ENCODE measurements at regions of chr10 and their contacts with region 1.

Region 1: DNA sequence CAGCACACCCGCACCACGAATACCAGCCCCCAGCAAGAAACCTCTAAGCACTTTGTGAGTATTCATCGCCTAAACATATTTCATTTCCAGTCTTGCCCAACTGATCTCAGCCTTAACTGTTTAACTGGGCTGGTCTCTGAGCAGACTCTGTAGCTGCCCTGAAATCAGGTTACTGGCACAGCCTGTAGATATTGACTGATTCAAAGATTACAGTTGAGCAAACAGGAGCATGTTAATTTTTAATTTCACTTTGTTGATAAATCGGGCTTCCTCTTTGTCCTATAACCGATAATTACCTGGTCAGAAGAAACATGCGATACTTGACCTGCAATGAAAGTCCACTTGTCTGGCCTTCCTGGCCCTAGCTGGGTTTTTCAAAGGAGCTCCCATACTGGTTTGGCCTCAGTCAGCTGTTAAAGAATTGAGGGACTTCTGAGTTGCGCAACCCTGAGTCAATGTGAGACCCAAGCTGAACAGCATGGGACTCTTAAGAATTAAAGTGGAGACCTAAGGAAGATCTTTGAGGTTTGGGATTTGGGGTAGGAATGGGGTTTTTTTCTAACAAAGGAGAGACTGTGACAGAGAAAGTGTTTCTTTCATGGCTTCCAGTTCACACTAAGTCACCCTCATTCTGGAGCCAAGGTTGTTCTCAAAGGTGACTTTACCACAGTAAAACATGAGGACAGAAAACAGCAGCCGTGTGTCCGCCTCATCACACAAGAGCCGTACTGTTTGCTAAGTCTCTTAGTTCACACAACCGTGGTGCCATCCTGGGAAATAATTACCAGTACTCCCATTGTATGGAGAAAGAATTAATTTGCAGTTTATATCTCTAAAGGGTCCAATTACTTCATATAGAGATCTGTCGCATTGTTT is 75.9 kb downstream of the PPP1R3C start:
- DNase-seq: peak; percentile 95
- ATAC-seq: peak; percentile 95
- H3K4me3 ChIP-seq: peak overlapping the region in 1 of 3 experiments; percentile 34; a peak in 1 of 6 replicates
- H3K27ac ChIP-seq: peak overlapping the region; percentile 87
- H3K4me1 ChIP-seq: peaks cover 96% of the 10 kb centered on the region
- H3K27me3 ChIP-seq: no peaks in the 10 kb centered on the region
- CTCF ChIP-seq: no peak
- EP300 ChIP-seq: peak; percentile 31 to 94; a peak in 2 of 4 replicates
- POLR2A ChIP-seq: 0 out of 4 replicates have a peak, but pooled peaks have one; percentile 11 to 33
- RAD21 ChIP-seq: peak; percentile 19; the same call in 1 of the 2 replicates

Region 2: DNA sequence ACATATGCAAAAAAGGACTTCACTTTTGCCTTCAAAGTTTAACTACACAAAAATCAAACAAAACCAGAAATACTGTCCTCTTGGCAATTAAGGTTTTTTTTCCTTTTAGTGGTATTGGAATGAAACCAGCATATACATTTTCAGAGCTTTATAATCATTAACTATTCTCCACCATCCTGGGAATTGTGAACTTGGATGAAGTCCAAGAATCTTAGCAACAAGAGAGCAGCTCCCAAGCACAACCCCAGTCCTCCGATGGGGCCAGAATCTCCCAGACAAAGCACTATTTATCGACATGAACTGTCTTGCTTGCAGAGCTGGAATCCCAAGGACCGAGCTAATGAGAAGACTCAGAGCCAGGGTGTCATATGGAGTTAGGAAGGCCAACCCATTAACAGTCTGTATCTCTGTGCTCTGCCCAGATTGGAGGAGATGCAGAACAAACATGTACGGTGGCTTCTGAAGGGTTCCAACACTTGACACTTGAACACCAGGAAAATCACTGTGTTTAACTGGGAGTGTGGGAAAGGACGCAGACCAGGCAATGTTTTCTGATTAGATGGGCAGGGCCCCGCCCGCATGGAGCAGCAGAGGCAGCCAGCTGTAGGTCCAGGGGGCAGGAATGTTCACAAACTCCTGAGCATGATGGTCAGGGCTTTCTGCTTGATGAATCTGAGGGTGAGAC is 40.4 kb after region 1 on chr10:
- CTCF ChIA-PET with region 1: no interaction called
- POLR2A ChIA-PET with region 1: no interaction called
- in situ Hi-C with region 1: no loop called
- intact Hi-C with region 1: loop called (anchors 5 kb)
- DNase-seq: peak; percentile 60
- ATAC-seq: peak; percentile 90
- H3K4me3 ChIP-seq: peak overlapping the region in 2 of 3 experiments; percentile 34 to 44; a peak in 4 of 6 replicates
- H3K27ac ChIP-seq: peak overlapping the region; percentile 8
- H3K4me1 ChIP-seq: peaks cover 29% of the 10 kb centered on the region
- H3K27me3 ChIP-seq: peaks cover 0 to 17% of the 10 kb centered on the region in 2 experiments; a peak in 2 of 5 replicates
- CTCF ChIP-seq: no peak
- EP300 ChIP-seq: no peak
- POLR2A ChIP-seq: no peak
- RAD21 ChIP-seq: no peak

Measured in HepG2 (cell line).